ENCODE measurements at regions of chr3 and their contacts with region 1.

Region 1: DNA sequence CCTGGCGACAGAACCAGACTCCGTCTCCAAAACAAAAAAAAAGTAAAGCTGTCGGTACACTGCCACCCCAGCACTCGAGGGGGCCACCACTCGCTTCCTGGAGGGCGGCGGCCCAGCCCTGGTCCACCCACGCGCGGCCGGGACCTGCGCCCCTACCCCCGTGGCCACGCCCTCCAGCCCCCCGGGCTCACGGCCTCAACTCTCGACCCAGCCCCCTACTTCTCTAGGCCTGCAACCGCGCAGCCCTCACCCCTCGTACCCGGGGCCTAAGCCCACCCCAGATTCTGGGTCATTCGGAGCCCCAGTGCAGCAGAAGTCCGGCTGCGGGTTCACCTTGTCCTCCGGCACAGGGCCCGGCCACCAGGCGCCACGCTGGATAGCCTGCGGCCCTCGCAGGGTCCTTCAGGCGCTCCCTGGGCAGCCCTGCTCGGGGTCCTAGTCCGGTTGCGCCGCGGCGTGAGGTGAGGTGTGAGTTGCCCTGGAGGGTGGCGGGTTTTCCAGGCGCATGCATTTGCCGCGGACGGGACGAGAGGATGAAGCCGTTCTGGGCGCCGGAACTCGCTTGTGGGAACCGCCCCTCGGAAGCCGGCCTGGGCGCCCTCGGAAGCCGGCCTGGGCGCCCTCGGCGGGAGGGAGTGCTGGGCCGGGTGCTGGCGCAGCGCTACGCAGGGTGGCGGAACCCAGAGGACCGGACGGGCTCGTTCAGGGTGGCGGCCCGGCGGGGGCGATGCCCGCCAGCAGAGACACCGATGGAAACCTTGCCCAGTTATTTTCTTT is 32.3 kb downstream of the SPINK8 start:
- DNase-seq: peak; percentile 95
- ATAC-seq: peak; percentile 91
- H3K4me3 Mint-ChIP-seq: peak within 1 kb of the TSS; percentile 97
- H3K27ac Mint-ChIP-seq: peak within 1 kb of the TSS; percentile 98
- H3K4me1 Mint-ChIP-seq: peaks cover 42% of the 10 kb centered on the region
- H3K27me3 Mint-ChIP-seq: no peaks in the 10 kb centered on the region
- CTCF ChIP-seq: no peak

Region 2: GRCh38 chr3:48318783-48319468 is 17.7 kb after region 1 on chr3:
- CTCF ChIA-PET with region 1: no interaction called
- POLR2A ChIA-PET with region 1: interaction called, 10 read pairs
- intact Hi-C with region 1: no loop called
- DNase-seq: no peak
- ATAC-seq: no peak
- H3K4me3 Mint-ChIP-seq: no peak overlapping the region
- H3K27ac Mint-ChIP-seq: no peak overlapping the region
- H3K4me1 Mint-ChIP-seq: no peaks in the 10 kb centered on the region
- H3K27me3 Mint-ChIP-seq: peaks cover 11% of the 10 kb centered on the region
- CTCF ChIP-seq: no peak

Region 3: DNA sequence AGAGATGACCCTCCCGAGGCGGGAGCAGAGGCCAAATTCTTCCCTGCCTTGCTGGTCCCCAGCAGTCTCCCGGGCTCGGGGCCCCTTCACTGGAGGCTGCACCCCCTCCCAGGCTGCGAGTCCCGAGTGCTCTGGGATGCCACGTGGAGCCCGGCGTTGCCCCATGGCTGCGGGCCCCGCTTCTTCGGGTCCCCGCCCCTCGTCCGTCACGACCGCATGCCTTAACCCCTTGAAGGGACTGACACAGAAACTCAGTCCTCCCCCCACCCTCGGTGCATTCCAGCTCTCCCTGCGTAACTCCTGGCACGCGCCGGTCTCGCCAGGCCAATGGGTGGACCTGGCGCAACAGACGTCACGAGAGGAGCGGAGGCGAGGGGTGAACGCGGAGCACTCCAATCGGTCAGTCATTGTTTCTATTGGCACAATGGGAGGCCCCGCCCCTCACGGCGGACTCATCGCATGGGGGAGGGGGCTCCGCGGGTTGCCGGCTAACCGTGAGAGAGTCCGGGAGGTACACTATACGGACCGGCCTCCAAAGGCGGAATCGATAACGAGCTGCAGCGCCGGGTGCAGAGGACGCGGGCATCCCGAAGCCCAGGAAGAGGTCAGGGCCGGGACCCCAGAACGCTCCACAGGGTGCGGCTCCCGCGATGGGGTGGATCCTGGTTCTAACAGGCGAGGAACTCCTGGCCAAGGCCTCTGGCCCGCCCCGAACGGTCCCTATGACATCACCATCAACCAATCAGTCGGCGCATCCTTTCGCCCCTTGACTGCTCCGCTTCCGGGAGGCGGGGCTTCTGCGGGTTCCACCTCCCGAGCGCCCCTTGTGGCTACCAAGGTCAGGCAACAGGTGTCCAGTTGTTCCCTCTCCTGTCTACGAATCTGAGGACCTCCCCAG is 362.5 kb after region 1 on chr3:
- CTCF ChIA-PET with region 1: no interaction called
- POLR2A ChIA-PET with region 1: no interaction called
- intact Hi-C with region 1: loop called (anchors 1 kb)
- DNase-seq: peak; percentile 75
- ATAC-seq: peak; percentile 79
- H3K4me3 Mint-ChIP-seq: peak overlapping the region; percentile 81
- H3K27ac Mint-ChIP-seq: no peak overlapping the region
- H3K4me1 Mint-ChIP-seq: peaks cover 24% of the 10 kb centered on the region
- H3K27me3 Mint-ChIP-seq: peaks cover 13% of the 10 kb centered on the region
- CTCF ChIP-seq: no peak